Activated T-helper 2 cell treated with anti-CD3 and anti-CD28 coated beads, Interferon-gamma antibody, Interleukin-2, Interleukin-4, amounts not matched to agents 10 μg/mL and 5 μg/mL and 100 μg/mL, durations not matched to agents 14 hours and 24 hours and 36 hours (primary cell): ENCODE measurements at regions of chr16 and their contacts with region 1.

Region 1: GRCh38 chr16:70610273-70611223 is 35.8 kb upstream of the IL34 start:
- DNase-seq: no peak
- H3K4me3 Mint-ChIP-seq: no peak overlapping the region
- H3K27ac Mint-ChIP-seq: no peak overlapping the region
- H3K4me1 Mint-ChIP-seq: no peaks in the 10 kb centered on the region
- H3K27me3 Mint-ChIP-seq: no peaks in the 10 kb centered on the region

Region 2: DNA sequence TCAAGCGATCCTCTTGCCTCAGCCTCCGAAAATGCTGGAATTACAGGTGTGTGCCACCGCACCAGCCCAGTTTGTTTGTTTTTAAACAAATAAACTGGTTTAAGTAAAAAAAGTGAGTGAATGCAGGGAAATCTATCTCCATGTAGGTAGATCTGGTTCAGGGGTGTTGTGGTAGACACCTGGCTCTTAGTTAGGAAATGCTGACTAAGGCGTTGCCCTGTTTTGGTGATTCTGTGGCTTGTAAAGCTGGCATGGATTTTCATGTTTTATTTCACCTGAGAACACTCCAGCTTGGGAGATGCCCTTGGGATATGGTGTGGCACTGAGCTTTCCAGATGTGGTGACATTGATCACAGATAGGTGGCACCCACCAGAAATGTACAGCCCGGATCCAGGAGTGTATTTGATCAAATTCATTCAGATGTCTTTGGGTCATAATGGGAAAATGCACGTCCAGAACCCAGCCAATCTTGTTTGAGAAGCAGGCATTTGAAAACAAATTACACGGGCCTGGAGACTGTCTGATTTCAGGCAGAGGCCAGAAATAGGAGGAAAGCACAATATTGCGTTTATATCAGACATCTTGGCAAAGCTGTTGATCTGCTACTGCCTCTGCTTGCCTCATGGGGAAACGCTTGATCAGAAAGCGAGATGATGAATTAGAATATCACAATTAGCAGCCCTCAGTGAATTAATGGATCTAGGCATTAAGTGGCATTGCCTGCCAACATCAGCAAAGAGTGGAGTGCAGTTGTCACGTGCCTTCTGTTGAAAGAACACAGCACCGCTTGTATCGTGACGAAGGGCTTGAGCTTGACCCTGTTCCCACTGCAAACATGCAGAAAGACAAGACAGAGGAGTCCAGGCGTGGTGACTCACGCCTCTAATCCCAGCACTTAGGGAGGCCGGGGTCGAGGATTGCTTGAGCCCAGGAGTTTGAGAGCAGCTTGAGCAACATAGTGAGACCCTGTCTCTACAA is 28.6 kb after region 1 on chr16:
- intact Hi-C with region 1: loop called (anchors 1 kb)
- DNase-seq: no peak
- H3K4me3 Mint-ChIP-seq: no peak overlapping the region
- H3K27ac Mint-ChIP-seq: no peak overlapping the region
- H3K4me1 Mint-ChIP-seq: no peaks in the 10 kb centered on the region
- H3K27me3 Mint-ChIP-seq: peaks cover 7% of the 10 kb centered on the region